Uterus (tissue), 4 donors: ENCODE measurements at regions of chr7 and their contacts with region 1.

Region 1: GRCh38 chr7:73578342-73579127 is at the start of gene TBL2:
- DNase-seq: peak; percentile 99
- H3K4me3 ChIP-seq: peak within 1 kb of the TSS; percentile 74 to 96
- H3K27ac ChIP-seq: peak within 1 kb of the TSS; percentile 80 to 95
- H3K4me1 ChIP-seq: peaks cover 0 to 4% of the 10 kb centered on the region in 2 donors
- H3K27me3 ChIP-seq: no peaks in the 10 kb centered on the region
- CTCF ChIP-seq: peak in 3 of 4 experiments; percentile 14 to 17 (median 17)
- POLR2A ChIP-seq: peak; percentile 89 to 93
- total RNA-seq, gene TBL2: 21.5 to 106 (median 50.9) TPM

Region 2: GRCh38 chr7:73522105-73522872 is 56.2 kb before region 1 on chr7 and contains the start of gene BAZ1B:
- intact Hi-C with region 1: loop called (anchors 10 kb)
- DNase-seq: peak; percentile 97 to 98
- H3K4me3 ChIP-seq: peak within 1 kb of the TSS; percentile 66 to 100
- H3K27ac ChIP-seq: peak within 1 kb of the TSS; percentile 91 to 97
- H3K4me1 ChIP-seq: peaks cover 0 to 20% of the 10 kb centered on the region in 2 donors
- H3K27me3 ChIP-seq: no peaks in the 10 kb centered on the region
- CTCF ChIP-seq: peak in 2 of 4 experiments; percentile 3 to 17
- POLR2A ChIP-seq: peak; percentile 62 to 74
- total RNA-seq, gene BAZ1B: 29.5 to 79.5 (median 59.8) TPM